K562 (cell line): ENCODE measurements at regions of chrX and their contacts with region 1.

Region 1: DNA sequence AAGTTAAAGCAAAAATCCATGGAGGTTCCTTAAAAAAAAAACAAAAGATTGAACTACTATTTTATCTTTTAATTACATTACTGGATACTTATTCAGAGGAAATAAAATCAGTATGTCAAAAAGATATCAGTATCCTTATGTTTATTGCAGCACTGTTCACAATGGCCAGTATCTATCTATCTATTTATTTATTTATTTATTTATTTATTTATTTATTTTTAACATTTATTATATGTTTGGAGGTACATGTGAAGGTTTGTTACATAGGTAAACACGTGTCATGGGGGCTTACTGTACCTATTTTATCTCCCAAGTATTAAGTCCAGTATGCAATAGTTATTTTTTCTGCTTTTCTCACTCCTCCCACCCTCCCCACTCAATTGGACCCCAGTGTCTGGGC is 881.1 kb upstream of the POU3F4 start:
- DNase-seq: no peak
- ATAC-seq: no peak
- H3K4me3 ChIP-seq: no peak overlapping the region
- H3K27ac ChIP-seq: no peak overlapping the region
- H3K4me1 ChIP-seq: no peaks in the 10 kb centered on the region
- H3K27me3 ChIP-seq: no peaks in the 10 kb centered on the region
- CTCF ChIP-seq: no peak
- EP300 ChIP-seq: no peak
- POLR2A ChIP-seq: no peak
- RAD21 ChIP-seq: no peak

Region 2: DNA sequence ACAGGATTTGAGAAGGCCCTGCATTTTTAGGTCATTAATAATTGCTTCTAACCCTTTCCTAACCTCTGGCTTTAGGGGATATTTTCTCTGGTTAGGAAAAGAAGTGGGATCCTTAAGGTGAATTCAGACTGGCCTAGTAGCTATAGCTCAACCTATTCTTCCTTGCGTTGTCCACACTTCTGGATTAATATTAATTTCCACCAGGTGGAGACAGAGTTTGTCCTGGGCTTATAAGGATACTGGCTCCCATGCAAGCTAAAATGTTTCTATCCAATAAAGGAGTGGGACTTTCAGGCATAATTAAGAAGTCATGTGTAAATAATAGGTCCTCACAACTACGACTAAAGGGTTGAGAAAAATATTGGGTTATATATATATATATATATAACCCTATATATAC is 21.1 kb after region 1 on chrX:
- CTCF ChIA-PET with region 1: no interaction called
- POLR2A ChIA-PET with region 1: no interaction called
- in situ Hi-C with region 1: no loop called
- intact Hi-C with region 1: loop called (anchors 1 kb)
- DNase-seq: no peak
- ATAC-seq: no peak
- H3K4me3 ChIP-seq: no peak overlapping the region
- H3K27ac ChIP-seq: no peak overlapping the region
- H3K4me1 ChIP-seq: no peaks in the 10 kb centered on the region
- H3K27me3 ChIP-seq: no peaks in the 10 kb centered on the region
- CTCF ChIP-seq: no peak
- EP300 ChIP-seq: no peak
- POLR2A ChIP-seq: no peak
- RAD21 ChIP-seq: no peak